ENCODE measurements at regions of chr12 and their contacts with region 1.

Region 1: GRCh38 chr12:117212563-117213190 is 22.4 kb upstream of the FBXO21 start:
- DNase-seq: peak; percentile 83
- H3K4me3 Mint-ChIP-seq: no peak overlapping the region
- H3K27ac Mint-ChIP-seq: no peak overlapping the region
- H3K4me1 Mint-ChIP-seq: no peaks in the 10 kb centered on the region
- H3K27me3 Mint-ChIP-seq: no peaks in the 10 kb centered on the region

Region 2: GRCh38 chr12:116474331-116474730 is 738.3 kb before region 1 on chr12:
- CTCF ChIA-PET with region 1: no interaction called
- intact Hi-C with region 1: no loop called
- DNase-seq: no peak
- H3K4me3 Mint-ChIP-seq: no peak overlapping the region
- H3K27ac Mint-ChIP-seq: no peak overlapping the region
- H3K4me1 Mint-ChIP-seq: no peaks in the 10 kb centered on the region
- H3K27me3 Mint-ChIP-seq: no peaks in the 10 kb centered on the region

Region 3: GRCh38 chr12:117202556-117202955 is 10.1 kb before region 1 on chr12:
- CTCF ChIA-PET with region 1: interaction called, 13 read pairs
- intact Hi-C with region 1: no loop called
- DNase-seq: no peak
- H3K4me3 Mint-ChIP-seq: no peak overlapping the region
- H3K27ac Mint-ChIP-seq: no peak overlapping the region
- H3K4me1 Mint-ChIP-seq: no peaks in the 10 kb centered on the region
- H3K27me3 Mint-ChIP-seq: peaks cover 9% of the 10 kb centered on the region

Region 4: GRCh38 chr12:117367011-117367638 is 154.4 kb after region 1 on chr12:
- CTCF ChIA-PET with region 1: no interaction called
- intact Hi-C with region 1: loop called (anchors 2 kb)
- DNase-seq: peak; percentile 77
- H3K4me3 Mint-ChIP-seq: no peak overlapping the region
- H3K27ac Mint-ChIP-seq: no peak overlapping the region
- H3K4me1 Mint-ChIP-seq: no peaks in the 10 kb centered on the region
- H3K27me3 Mint-ChIP-seq: peaks cover 39% of the 10 kb centered on the region

Region 5: DNA sequence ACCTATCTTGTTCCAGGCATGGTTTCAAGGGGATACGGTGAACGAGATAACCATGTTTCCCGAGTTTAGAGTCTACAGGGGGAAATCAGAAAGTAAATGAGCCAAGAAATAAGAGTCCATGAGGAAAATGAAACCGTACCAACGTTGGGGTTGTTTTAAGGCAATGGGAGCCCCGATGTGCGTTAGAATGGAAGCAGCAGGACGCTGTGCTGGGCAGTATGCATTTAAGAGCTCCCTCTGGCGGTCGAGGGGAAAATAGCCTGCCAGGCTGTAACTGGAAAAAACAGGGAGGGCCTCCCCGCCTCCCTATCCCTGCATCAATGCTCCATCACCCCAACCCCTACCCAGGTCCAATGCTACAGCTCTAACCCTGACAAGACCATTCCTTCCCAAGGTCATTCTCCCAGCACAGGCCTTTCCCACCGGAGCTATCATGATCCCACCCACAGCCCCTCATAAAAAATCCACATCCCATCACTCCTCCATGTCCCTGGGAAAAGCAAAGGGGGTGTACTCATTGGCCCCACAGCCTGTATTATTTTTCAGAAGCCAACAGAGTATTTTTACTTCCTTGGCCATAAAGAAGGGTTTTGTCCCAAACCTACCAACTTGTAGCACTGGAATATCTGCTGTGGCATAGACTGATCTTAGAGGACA is 375.1 kb after region 1 on chr12:
- CTCF ChIA-PET with region 1: interaction called, 3 read pairs
- intact Hi-C with region 1: loop called (anchors 1 kb)
- DNase-seq: peak; percentile 61
- H3K4me3 Mint-ChIP-seq: no peak overlapping the region
- H3K27ac Mint-ChIP-seq: no peak overlapping the region
- H3K4me1 Mint-ChIP-seq: no peaks in the 10 kb centered on the region
- H3K27me3 Mint-ChIP-seq: peaks cover 16% of the 10 kb centered on the region

Region 6: DNA sequence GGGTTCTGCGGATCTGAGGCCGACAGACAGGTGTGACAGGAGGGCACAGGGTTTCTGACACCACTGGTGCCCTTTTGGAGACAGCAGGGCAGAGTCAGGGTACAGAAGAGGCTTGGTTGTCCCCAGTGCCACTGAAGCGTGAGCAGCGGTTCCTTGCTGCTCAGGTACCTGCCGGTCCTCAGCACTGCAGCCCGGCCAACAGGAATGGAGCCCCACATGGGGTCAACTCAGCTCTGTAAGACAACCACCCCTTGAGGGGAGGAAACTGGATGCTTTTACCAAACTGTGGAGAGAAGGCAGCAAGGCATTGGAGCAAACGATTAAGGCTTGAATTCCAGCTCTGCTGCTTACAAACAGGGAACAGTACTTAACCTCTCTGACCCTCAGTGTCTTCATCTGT is 395.1 kb after region 1 on chr12:
- CTCF ChIA-PET with region 1: no interaction called
- intact Hi-C with region 1: no loop called
- DNase-seq: no peak
- H3K4me3 Mint-ChIP-seq: no peak overlapping the region
- H3K27ac Mint-ChIP-seq: no peak overlapping the region
- H3K4me1 Mint-ChIP-seq: no peaks in the 10 kb centered on the region
- H3K27me3 Mint-ChIP-seq: no peaks in the 10 kb centered on the region

Region 7: DNA sequence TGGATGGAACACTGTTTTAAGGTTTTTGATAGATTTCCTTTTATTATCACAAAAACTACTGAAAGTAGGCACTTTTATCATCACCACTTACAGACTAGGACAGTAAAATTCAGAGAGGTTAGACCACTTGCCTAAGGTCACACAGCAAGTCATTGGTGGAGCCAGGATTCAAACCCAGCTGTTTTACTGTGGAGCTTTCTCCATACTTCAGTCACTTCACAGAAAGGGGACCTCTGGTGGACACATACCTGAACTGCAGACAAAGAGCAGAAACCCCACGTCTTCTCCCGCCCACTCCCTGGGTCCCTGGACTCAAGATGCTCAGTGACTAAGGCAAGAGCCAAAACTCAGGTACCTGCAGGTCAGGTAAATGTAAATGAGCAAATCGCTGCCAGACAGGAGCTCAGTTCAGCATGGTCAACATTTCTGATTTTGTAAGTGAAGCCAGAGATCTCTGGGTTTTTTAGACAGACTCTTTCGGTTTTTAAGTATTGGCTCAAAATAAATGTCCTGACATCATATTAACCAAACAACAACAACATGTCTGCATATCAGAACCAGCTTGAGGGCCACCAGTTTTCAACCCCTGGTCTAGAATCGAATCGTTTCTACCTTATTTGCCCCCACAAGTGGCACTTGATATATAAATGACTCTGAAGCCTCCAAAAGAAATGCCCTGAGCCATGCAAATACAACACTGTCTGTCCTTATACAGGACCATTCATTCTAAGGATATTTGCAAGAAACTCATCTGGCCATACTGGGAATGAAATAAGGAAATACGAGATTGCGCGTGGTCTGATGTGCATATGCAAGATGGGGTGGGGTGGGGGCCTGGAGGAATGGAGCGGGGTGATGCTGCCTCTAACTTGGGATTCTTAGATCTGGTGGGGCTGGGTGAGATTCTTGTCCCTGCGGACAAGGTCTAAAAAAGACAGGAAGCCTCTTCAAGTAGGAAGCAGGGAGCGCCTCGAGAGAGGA is 645.2 kb after region 1 on chr12:
- CTCF ChIA-PET with region 1: interaction called, 4 read pairs
- intact Hi-C with region 1: loop called (anchors 5 kb)
- DNase-seq: peak; percentile 76
- H3K4me3 Mint-ChIP-seq: no peak overlapping the region
- H3K27ac Mint-ChIP-seq: no peak overlapping the region
- H3K4me1 Mint-ChIP-seq: no peaks in the 10 kb centered on the region
- H3K27me3 Mint-ChIP-seq: peaks cover 2% of the 10 kb centered on the region